HCT116 (cell line): ENCODE measurements at regions of chr2 and their contacts with region 1.

Region 1: DNA sequence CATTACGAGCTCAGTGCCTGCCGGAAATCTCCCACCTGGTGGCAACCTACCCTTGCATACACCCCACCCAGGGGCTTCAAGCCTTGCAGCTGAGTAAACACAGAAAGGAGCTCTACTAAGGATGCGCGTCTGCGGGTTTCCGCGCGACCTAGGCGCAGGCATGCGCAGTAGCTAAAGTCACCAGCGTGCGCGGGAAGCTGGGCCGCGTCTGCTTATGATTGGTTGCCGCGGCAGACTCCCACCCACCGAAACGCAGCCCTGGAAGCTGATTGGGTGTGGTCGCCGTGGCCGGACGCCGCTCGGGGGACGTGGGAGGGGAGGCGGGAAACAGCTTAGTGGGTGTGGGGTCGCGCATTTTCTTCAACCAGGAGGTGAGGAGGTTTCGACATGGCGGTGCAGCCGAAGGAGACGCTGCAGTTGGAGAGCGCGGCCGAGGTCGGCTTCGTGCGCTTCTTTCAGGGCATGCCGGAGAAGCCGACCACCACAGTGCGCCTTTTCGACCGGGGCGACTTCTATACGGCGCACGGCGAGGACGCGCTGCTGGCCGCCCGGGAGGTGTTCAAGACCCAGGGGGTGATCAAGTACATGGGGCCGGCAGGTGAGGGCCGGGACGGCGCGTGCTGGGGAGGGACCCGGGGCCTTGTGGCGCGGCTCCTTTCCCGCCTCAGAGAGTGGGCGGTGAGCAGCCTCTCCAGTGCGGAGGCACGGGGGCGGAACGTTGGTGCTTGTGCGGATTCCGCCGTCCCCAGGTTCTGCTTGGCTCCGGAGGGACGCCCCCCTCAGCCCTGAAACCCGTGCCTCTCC is at the start of gene MSH2:
- DNase-seq: peak; percentile 80
- ATAC-seq: peak; percentile 92
- H3K4me3 ChIP-seq: peak within 1 kb of the TSS; percentile 80 to 86
- H3K27ac ChIP-seq: peak within 1 kb of the TSS; percentile 76
- H3K4me1 ChIP-seq: peaks cover 13 to 25% of the 10 kb centered on the region in 2 experiments; a peak in 3 of 4 replicates
- H3K27me3 ChIP-seq: no peaks in the 10 kb centered on the region
- CTCF ChIP-seq: no peak
- POLR2A ChIP-seq: peak; percentile 59
- RAD21 ChIP-seq: no peak
- total RNA-seq, gene MSH2: 54.9 TPM

Region 2: DNA sequence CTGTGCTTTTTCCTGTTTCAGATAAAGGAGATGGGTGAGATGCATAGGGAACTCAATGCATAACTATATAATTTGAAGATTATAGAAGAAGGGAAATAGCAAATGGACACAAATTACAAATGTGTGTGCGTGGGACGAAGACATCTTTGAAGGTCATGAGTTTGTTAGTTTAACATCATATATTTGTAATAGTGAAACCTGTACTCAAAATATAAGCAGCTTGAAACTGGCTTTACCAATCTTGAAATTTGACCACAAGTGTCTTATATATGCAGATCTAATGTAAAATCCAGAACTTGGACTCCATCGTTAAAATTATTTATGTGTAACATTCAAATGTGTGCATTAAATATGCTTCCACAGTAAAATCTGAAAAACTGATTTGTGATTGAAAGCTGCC is 16.5 kb before region 1 on chr2:
- CTCF ChIA-PET with region 1: interaction called, 16 read pairs
- POLR2A ChIA-PET with region 1: interaction called, 3 read pairs
- RAD21 ChIA-PET with region 1: no interaction called
- intact Hi-C with region 1: no loop called
- DNase-seq: no peak
- ATAC-seq: no peak
- H3K4me3 ChIP-seq: no peak overlapping the region
- H3K27ac ChIP-seq: no peak overlapping the region
- H3K4me1 ChIP-seq: no peaks in the 10 kb centered on the region
- H3K27me3 ChIP-seq: no peaks in the 10 kb centered on the region
- CTCF ChIP-seq: no peak
- POLR2A ChIP-seq: no peak
- RAD21 ChIP-seq: no peak